PC-3 (cell line): ENCODE measurements at regions of chr2 and their contacts with region 1.

Region 1: GRCh38 chr2:214378277-214379116 is 32.4 kb upstream of the VWC2L start:
- DNase-seq: peak; percentile 91
- ATAC-seq: peak; percentile 68
- H3K4me3 ChIP-seq: peak overlapping the region; percentile 8; the same call in 1 of the 2 replicates
- H3K27ac ChIP-seq: peak overlapping the region; percentile 80
- H3K4me1 ChIP-seq: peaks cover 46% of the 10 kb centered on the region
- H3K27me3 ChIP-seq: no peaks in the 10 kb centered on the region
- CTCF ChIP-seq: peak; percentile 58

Region 2: GRCh38 chr2:214361123-214361522 is 17.4 kb before region 1 on chr2:
- CTCF ChIA-PET with region 1: no interaction called
- POLR2A ChIA-PET with region 1: no interaction called
- intact Hi-C with region 1: loop called (anchors 2 kb)
- DNase-seq: no peak
- ATAC-seq: no peak
- H3K4me3 ChIP-seq: no peak overlapping the region
- H3K27ac ChIP-seq: no peak overlapping the region
- H3K4me1 ChIP-seq: no peaks in the 10 kb centered on the region
- H3K27me3 ChIP-seq: no peaks in the 10 kb centered on the region
- CTCF ChIP-seq: no peak